Activated CD8-positive, alpha-beta memory T cell treated with anti-CD3 and anti-CD28 coated beads, Interleukin-2, amount 10 ng/mL, durations not matched to agents 7 days and 5 days (primary cell): ENCODE measurements at regions of chr1 and their contacts with region 1.

Region 1: DNA sequence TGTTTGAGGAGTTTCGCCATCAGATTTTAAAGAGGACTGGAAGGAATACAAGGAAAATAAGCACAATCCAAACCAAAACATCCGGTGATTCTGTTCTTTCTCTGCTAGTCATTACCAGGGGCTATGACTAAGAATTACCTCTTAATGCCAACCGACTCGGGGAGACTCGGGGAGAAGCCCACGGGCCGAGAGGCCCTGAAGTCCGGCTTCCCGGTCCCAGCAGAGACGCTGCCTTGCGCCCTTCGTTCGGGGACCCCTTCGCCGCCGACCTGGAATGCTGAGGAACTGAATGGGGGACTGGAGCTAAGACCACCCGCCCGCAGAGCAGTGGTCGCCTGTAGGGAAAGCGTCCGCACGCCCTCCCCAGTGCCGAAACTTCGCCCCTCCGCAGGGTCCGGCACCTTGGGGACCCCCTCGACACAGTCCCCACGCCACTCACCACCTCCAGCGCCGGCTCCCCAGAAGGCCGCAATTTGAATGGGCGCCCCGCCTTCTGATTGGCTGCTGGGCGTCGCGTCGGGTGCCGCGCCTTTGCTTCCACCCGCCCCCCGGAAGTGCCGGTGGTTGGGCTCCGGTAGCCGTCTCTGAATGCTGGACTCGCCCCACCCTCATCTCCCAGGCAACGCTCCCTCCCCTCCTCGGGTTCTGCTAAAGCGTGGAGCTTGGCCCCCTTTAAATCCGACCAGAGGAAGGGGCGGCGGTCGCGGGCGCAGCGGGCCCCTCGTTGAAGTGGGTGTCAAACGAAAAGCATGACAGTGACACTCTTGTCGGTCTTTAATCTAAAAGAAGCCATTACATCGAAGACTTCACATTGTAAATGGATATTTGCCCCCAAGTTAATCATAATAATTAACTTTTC is at the start of gene KIF14:
- DNase-seq: peak; percentile 98
- ATAC-seq: peak; percentile 97
- H3K4me3 Mint-ChIP-seq: peak within 1 kb of the TSS; percentile 87
- H3K27ac Mint-ChIP-seq: peak within 1 kb of the TSS; percentile 87
- H3K4me1 Mint-ChIP-seq: peaks cover 48% of the 10 kb centered on the region
- H3K27me3 Mint-ChIP-seq: no peaks in the 10 kb centered on the region
- total RNA-seq, gene KIF14: 30.8 TPM

Region 2: DNA sequence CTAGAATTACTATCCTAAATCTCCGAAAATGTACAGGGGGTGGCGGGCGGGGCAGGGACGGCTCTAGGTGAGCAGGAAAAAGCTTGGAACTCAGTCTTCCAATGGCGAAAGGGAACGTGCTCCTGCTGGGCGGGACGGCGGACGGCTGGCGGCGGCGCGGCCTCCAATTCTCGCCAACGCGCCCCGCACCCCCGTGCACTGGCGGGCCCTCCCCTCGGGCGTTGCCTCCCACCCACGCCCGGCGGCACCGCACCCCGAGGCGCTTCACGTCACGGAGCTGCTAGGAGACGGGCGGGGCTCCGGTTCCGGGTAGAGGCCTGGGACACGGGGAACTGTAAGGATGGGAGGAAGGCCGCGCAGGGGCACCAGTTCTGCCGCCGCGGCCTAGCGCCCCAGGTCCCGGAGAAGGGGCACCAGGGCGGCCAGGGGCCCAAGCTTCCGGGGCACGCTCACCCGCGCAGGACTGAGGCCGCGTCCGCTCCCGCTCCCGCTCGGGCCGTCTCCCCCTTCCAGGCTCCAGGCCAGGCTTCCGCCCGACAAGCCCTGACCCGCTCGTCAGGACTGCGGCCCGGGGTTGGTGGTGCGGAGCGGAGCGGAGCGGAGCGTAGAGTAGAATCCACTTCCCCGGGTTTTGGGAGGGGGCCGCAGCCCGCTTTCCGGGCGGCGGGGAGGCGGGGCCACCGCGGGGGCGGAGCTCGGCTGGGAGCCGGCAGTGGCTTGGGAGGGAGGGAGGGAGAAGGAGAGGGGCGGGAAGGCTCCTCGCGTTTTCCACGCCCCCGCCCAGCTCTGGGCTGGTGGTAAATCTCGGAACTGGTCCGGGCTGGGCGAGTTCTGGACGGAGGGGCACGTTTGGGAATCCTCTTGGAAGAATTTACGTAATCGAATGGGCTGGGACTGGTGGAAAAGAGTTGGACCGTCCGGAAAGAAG is 49.1 kb after region 1 on chr1 and contains the start of gene DDX59:
- CTCF ChIA-PET with region 1: interaction called, 52 read pairs
- DNase-seq: peak; percentile 91
- ATAC-seq: peak; percentile 87
- H3K4me3 Mint-ChIP-seq: peak within 1 kb of the TSS; percentile 98
- H3K27ac Mint-ChIP-seq: peak within 1 kb of the TSS; percentile 94
- H3K4me1 Mint-ChIP-seq: peaks cover 44% of the 10 kb centered on the region
- H3K27me3 Mint-ChIP-seq: no peaks in the 10 kb centered on the region
- total RNA-seq, gene DDX59: 33.6 to 35.9 TPM

Region 3: GRCh38 chr1:200793677-200794076 is 173.2 kb after region 1 on chr1:
- CTCF ChIA-PET with region 1: interaction called, 14 read pairs
- DNase-seq: no peak
- ATAC-seq: no peak
- H3K4me3 Mint-ChIP-seq: no peak overlapping the region
- H3K27ac Mint-ChIP-seq: no peak overlapping the region
- H3K4me1 Mint-ChIP-seq: no peaks in the 10 kb centered on the region
- H3K27me3 Mint-ChIP-seq: peaks cover 16% of the 10 kb centered on the region

Region 4: GRCh38 chr1:200802865-200803512 is 182.5 kb after region 1 on chr1:
- CTCF ChIA-PET with region 1: interaction called, 75 read pairs
- DNase-seq: peak; percentile 82
- ATAC-seq: peak; percentile 86
- H3K4me3 Mint-ChIP-seq: no peak overlapping the region
- H3K27ac Mint-ChIP-seq: no peak overlapping the region
- H3K4me1 Mint-ChIP-seq: no peaks in the 10 kb centered on the region
- H3K27me3 Mint-ChIP-seq: peaks cover 38% of the 10 kb centered on the region

Region 5: GRCh38 chr1:200808846-200809245 is 188.3 kb after region 1 on chr1:
- CTCF ChIA-PET with region 1: interaction called, 75 read pairs
- DNase-seq: no peak
- ATAC-seq: no peak
- H3K4me3 Mint-ChIP-seq: no peak overlapping the region
- H3K27ac Mint-ChIP-seq: no peak overlapping the region
- H3K4me1 Mint-ChIP-seq: no peaks in the 10 kb centered on the region
- H3K27me3 Mint-ChIP-seq: peaks cover 40% of the 10 kb centered on the region

Region 6: GRCh38 chr1:201119206-201120197 is 499.0 kb after region 1 on chr1:
- CTCF ChIA-PET with region 1: interaction called, 12 read pairs
- DNase-seq: peak; percentile 69
- ATAC-seq: peak; percentile 32
- H3K4me3 Mint-ChIP-seq: no peak overlapping the region
- H3K27ac Mint-ChIP-seq: no peak overlapping the region
- H3K4me1 Mint-ChIP-seq: peaks cover under 1% of the 10 kb centered on the region
- H3K27me3 Mint-ChIP-seq: peaks cover 45% of the 10 kb centered on the region